Activated naive CD4-positive, alpha-beta T cell treated with anti-CD3 and anti-CD28 coated beads, Interleukin-2, amount 10 ng/mL, durations not matched to agents 7 days and 5 days (primary cell): ENCODE measurements at regions of chr1 and their contacts with region 1.

Region 1: DNA sequence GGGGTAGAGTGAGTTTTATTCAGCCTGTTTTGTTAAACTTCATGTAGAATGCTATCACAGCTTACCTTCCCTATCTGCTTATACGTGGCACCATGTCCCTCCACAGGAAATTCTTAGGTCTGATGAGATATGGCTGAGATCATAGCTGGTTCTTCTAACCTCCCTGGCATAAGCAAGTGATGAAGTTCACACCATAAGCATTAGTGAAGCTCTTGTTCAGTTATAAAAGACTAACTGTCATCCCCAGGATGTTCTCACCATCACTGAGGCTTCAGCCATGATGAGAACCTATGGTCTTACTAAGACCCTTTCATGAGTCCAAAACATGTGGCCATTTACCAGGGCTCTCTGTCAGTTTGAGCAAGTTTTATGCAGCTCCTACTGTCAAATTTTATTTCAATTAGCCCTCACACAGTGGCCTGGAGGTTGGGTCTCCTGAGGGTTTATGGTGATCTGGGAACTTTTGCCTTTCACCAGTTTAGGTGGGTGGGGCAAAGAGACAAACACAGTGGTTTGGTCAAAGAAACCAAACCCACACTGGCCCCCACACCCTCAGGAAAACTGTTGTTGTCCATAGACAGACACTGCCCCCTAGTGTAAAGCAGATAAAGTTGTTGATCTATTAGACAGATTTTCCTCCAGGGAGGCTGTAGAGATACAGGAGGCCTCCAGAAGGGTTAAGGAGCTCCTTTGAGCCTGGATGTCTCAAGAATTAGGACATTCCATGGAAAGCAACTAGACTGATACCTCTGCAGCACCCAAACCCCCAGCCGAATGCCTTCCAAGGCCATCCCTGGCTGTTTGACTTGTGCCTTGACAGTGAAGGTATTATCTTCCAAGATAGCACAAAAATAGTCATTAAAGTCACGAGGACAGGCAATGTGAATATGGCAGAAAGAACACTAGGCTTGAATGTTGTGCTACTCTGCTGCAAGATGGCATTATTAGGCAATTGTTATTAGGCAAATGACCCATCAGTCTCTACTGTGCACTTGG is 5.0 kb downstream of the SLC22A15 start:
- DNase-seq: peak; percentile 30
- H3K4me3 Mint-ChIP-seq: no peak overlapping the region
- H3K27ac Mint-ChIP-seq: no peak overlapping the region
- H3K4me1 Mint-ChIP-seq: peaks cover 6% of the 10 kb centered on the region
- H3K27me3 Mint-ChIP-seq: peaks cover 38% of the 10 kb centered on the region

Region 2: DNA sequence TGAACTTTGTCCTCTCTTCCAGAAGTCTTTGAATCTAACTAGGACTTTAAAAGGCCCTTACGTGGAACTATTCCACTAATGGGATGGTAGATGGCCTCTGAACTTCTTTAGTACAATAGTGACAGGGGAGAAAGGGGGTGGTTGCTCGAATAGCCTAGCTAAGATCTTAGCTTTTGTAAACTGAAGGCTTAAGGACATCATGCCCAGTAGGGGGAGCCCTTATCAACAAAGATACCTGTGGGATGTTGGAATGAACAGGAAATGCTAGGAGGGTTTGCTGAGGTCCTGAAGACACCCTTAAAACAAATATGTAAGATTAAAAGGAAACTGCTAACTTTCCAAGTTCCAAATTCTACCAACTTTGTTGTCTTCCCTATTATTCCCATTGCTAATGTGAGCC is 173.6 kb before region 1 on chr1:
- CTCF ChIA-PET with region 1: interaction called, 17 read pairs
- DNase-seq: peak; percentile 64
- H3K4me3 Mint-ChIP-seq: no peak overlapping the region
- H3K27ac Mint-ChIP-seq: no peak overlapping the region
- H3K4me1 Mint-ChIP-seq: no peaks in the 10 kb centered on the region
- H3K27me3 Mint-ChIP-seq: peaks cover 14% of the 10 kb centered on the region

Region 3: GRCh38 chr1:115939455-115939854 is 41.8 kb before region 1 on chr1:
- CTCF ChIA-PET with region 1: no interaction called
- DNase-seq: no peak
- H3K4me3 Mint-ChIP-seq: no peak overlapping the region
- H3K27ac Mint-ChIP-seq: no peak overlapping the region
- H3K4me1 Mint-ChIP-seq: no peaks in the 10 kb centered on the region
- H3K27me3 Mint-ChIP-seq: no peaks in the 10 kb centered on the region

Region 4: DNA sequence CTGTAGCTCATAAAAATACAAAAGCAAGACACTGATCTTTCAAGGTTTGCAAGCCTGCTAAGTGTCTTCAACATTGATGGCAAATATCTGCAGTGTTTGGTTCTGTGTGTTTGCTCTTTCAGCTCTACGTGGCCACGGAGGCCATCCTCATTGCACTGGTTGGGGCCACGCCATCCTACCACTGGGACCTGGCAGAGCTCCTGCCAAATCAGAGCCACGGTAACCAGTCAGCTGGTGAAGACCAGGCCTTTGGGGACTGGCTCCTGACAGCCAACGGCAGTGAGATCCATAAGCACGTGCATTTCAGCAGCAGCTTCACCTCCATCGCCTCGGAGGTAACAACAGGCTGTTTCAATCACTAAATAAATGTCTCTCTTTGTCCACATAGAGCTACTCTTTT is 10.6 kb after region 1 on chr1:
- CTCF ChIA-PET with region 1: interaction called, 11 read pairs
- DNase-seq: no peak
- H3K4me3 Mint-ChIP-seq: no peak overlapping the region
- H3K27ac Mint-ChIP-seq: no peak overlapping the region
- H3K4me1 Mint-ChIP-seq: peaks cover 2% of the 10 kb centered on the region
- H3K27me3 Mint-ChIP-seq: peaks cover 4% of the 10 kb centered on the region

Region 5: DNA sequence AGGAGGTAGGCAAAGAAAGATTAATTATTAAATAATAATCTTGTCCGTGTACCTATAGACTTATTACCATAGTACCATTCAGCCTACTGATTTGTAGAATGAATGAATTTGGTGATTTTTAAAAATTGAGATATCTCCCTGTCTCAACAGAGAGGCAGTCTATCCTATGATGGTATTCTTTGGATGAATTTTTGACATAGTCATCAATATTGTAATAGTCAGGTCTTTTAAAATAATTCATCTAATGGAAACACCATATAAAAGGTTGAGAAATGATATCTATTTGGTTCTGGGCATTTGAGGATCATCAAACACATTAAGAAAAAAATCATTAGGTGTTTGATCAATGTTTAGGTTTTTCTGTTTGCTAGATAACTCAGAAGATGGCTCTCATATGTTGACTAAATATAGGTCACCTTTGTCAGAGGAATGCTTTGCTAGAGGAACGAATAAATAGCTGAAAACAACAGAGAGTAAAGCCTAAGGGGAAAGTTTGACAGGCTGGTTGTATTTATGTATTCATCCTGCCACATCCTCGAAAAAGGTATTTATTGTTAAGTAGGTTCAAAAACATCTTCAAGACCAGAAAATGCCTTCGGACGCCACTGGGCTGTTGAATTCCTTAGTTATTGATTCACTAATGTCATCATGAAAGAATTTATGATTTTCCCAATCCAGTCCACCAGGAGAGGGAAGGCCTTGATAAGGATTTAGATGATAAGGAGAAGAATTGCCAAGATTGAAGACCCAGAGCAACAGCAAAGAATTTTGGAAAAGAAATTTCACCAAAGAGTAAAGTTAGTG is 94.5 kb after region 1 on chr1:
- CTCF ChIA-PET with region 1: no interaction called
- DNase-seq: no peak
- H3K4me3 Mint-ChIP-seq: no peak overlapping the region
- H3K27ac Mint-ChIP-seq: no peak overlapping the region
- H3K4me1 Mint-ChIP-seq: no peaks in the 10 kb centered on the region
- H3K27me3 Mint-ChIP-seq: peaks cover 8% of the 10 kb centered on the region